Common myeloid progenitor, CD34-positive (primary cell): ENCODE measurements at regions of chr18 and their contacts with region 1.

Region 1: DNA sequence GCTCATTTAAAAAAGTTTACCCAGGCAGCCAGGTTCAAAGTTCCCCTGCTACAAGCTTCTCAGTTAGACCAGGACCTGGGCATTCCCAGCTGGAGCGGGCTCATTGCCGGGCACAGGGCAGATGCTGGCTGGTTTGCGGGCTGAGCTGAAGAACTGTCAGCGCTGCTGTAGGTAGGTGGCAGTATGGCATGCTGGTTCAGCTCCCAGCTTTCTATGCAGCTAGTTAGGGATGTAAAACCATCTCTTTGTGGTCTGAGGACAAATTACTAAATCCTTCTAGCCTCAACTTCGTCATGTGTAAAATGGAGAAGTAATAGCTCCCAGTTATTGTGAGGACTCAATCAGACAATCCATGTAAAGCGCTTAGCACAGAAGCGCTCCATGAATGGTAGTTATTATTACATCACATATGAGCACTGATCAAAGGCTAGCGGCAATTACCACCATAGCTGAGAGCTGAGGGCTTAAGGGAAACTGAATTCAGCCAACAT is 2.4 kb upstream of the LDLRAD4 start:
- DNase-seq: peak; percentile 80 to 84 (median 83)
- H3K4me3 ChIP-seq: peak overlapping the region in 1 of 7 experiments; percentile 95
- H3K27ac ChIP-seq: no peak overlapping the region
- H3K4me1 ChIP-seq: peaks cover 17 to 46% (median 30%) of the 10 kb centered on the region in 4 experiments
- H3K27me3 ChIP-seq: no peaks in the 10 kb centered on the region

Region 2: DNA sequence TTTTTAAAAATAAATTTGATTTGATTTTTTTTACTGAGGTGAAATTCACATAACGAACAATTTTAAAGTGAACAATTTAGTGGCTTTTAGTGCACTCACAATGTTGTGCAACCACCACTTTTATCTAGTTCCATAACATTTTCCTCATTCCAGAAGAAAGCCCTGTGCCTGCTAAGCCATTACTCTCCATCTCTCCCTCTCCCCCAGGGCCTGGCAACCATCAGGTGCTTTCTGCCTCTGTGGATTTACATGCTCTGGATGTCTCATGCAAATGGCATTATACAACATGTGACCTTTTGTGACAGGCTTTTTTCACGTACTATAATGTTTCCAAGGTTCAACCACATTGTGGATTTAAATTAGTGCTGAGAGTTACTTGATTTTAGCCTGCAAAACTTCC is 17.4 kb before region 1 on chr18:
- CTCF ChIA-PET with region 1: no interaction called
- POLR2A ChIA-PET with region 1: no interaction called
- DNase-seq: no peak
- H3K4me3 ChIP-seq: no peak overlapping the region
- H3K27ac ChIP-seq: no peak overlapping the region
- H3K4me1 ChIP-seq: no peaks in the 10 kb centered on the region
- H3K27me3 ChIP-seq: no peaks in the 10 kb centered on the region

Region 3: GRCh38 chr18:13525381-13526029 is 309.4 kb after region 1 on chr18:
- CTCF ChIA-PET with region 1: interaction called, 40 read pairs
- POLR2A ChIA-PET with region 1: no interaction called
- DNase-seq: no peak
- H3K4me3 ChIP-seq: no peak overlapping the region
- H3K27ac ChIP-seq: no peak overlapping the region
- H3K4me1 ChIP-seq: peaks cover 3 to 17% (median 13%) of the 10 kb centered on the region in 4 experiments
- H3K27me3 ChIP-seq: no peaks in the 10 kb centered on the region

Region 4: GRCh38 chr18:13530879-13531387 is 314.8 kb after region 1 on chr18:
- CTCF ChIA-PET with region 1: interaction called, 40 read pairs
- POLR2A ChIA-PET with region 1: no interaction called
- DNase-seq: peak; percentile 67 to 73 (median 69)
- H3K4me3 ChIP-seq: no peak overlapping the region
- H3K27ac ChIP-seq: no peak overlapping the region
- H3K4me1 ChIP-seq: peaks cover 3 to 20% (median 14%) of the 10 kb centered on the region in 4 experiments
- H3K27me3 ChIP-seq: no peaks in the 10 kb centered on the region